ENCODE measurements at regions of chr12 and their contacts with region 1.

Region 1: GRCh38 chr12:115035535-115036107 is 351.6 kb upstream of the TBX3 start:
- DNase-seq: no peak
- ATAC-seq: peak; percentile 57

Region 2: DNA sequence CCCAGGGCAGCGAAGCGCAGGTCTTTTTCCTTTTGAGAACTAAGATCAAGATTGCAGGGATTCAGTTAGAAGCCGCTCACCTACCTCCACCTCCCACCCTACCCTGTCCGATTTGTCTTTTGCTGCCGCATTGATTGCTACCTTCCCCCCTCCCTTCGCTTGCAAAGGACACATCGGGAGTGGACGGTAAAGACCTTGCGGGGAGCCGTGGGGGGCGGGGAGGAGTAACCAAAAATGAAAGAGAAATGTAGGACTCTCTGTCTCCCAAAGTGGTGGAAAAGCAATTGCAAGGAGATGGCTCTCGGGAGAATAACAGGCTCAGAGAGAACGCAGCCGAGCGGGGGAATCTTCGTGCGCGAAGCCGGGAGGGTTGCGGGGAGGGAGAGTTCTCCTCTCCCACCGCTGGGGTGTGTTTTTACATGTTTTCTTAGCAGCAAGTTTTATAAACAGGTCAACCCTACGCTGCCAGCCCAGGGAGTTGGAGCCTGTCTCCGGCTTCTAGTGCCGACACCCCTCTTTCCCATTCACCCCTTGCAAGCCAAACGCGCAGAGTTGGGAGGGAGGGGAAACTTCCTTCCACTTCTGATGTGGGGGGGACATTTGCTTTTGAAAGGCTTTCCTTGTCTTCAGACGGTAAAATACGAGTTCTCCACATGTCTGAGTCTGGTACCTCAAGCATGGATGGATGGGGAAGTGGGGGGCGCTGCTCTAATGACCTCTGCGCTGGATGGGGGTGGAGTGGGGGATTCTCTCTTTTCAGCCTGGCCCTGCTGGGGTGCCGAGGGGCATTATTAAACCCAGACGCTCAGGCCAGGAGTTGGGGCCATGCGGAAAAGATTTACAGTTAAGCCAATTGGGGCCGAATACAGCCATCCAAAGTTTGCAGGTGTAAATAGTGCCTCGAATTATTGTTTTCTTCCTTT is 342.8 kb before region 1 on chr12:
- intact Hi-C with region 1: loop called (anchors 10 kb)
- DNase-seq: no peak
- ATAC-seq: no peak

Region 3: DNA sequence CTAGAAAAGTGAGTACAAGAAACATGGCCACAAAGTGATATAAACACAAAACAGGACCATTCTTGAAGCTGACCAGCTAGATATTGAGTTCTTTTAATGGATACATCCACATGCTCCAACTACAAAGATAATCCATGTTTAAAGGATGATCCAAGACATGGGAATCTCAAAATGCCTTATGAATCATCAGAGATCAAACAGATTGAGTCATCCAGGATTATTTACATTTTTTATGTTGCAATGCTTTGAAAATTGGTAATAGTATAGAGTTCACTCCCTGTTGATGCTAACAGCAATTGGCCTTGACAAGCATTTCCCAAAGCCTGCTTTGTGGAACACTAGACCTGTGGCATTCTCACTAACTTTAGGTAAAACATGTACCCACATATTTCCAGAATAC is 58.7 kb before region 1 on chr12:
- intact Hi-C with region 1: no loop called
- DNase-seq: no peak
- ATAC-seq: no peak

Region 4: DNA sequence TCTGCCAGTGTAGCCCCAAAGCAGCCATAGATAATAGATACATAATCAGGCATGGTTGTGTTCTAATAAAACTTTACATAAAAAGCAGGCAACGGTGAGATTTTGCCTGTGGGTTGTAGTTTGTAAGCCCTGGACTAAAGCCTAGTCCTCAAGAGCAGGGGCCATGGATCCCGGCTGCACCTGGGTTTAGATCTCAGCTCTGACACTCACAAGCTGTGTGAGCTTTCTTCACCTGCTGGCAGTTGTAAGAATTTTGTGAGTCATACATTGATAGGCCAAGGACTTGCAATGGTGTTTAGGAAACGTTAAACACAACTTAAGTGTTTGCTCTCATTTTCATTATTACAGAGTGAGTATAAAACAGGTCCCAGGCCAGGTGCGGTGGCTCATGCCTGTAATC is 44.1 kb after region 1 on chr12:
- intact Hi-C with region 1: no loop called
- DNase-seq: no peak
- ATAC-seq: no peak

Region 5: GRCh38 chr12:115840159-115840558 is 804.5 kb after region 1 on chr12:
- intact Hi-C with region 1: no loop called
- DNase-seq: no peak
- ATAC-seq: no peak

Measured in Right ventricle myocardium inferior (tissue), 1 donor.